ENCODE measurements at regions of chr11 and their contacts with region 1.

Region 1: GRCh38 chr11:117327567-117328374 is at the start of gene CEP164:
- DNase-seq: peak; percentile 97
- ATAC-seq: peak; percentile 98
- H3K4me3 Mint-ChIP-seq: peak within 1 kb of the TSS; percentile 64
- H3K27ac Mint-ChIP-seq: peak within 1 kb of the TSS; percentile 76
- H3K4me1 Mint-ChIP-seq: peaks cover 5% of the 10 kb centered on the region
- H3K27me3 Mint-ChIP-seq: peaks cover 5% of the 10 kb centered on the region
- total RNA-seq, gene CEP164: 31.7 to 32.4 TPM

Region 2: DNA sequence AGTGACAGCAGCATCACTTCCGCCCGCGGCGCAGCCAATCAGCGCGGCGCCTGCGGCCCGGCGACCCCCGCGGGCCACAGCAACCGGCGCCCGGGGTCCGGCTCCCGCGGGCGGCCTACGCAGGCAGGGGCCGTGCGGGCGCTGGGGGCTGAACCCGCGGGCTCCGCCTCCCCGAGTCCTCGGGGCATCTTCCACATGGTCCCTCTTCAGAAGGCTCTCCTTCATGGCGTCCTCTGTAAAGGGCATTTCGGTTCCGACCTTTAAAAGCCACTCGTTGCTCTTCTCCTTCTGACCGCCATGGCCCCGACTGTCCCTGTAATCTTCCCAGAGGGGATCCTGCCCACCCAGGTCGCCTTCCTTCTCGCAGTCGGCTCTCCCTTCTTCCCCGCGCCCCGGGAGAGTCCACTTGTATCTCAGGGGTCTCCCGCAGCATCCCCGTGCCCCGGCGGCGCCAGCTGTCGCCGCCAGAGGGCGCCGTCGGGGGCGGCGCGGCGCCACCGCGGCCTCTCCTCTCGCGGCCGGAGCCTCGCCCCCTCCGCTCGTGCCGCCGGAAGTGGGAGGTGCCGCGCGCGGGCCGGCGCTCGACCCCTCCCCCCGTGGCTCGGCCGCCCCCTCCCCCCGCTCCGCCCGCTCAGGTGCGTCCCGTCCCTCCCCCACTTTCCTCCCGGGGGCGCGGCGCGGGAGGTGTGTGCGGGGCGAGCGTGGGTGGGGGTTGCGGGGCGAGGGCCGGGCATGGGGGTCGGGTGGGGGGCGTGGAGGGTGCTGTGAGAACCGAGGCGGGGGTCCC is 95.5 kb before region 1 on chr11 and contains the start of gene RNF214:
- CTCF ChIA-PET with region 1: interaction called, 10 read pairs
- POLR2A ChIA-PET with region 1: interaction called, 15 read pairs
- DNase-seq: peak; percentile 79
- ATAC-seq: peak; percentile 77
- H3K4me3 Mint-ChIP-seq: peak within 1 kb of the TSS; percentile 89
- H3K27ac Mint-ChIP-seq: peak within 1 kb of the TSS; percentile 97
- H3K4me1 Mint-ChIP-seq: peaks cover 43% of the 10 kb centered on the region
- H3K27me3 Mint-ChIP-seq: no peaks in the 10 kb centered on the region
- total RNA-seq, gene RNF214: 19.5 to 21.2 TPM

Region 3: DNA sequence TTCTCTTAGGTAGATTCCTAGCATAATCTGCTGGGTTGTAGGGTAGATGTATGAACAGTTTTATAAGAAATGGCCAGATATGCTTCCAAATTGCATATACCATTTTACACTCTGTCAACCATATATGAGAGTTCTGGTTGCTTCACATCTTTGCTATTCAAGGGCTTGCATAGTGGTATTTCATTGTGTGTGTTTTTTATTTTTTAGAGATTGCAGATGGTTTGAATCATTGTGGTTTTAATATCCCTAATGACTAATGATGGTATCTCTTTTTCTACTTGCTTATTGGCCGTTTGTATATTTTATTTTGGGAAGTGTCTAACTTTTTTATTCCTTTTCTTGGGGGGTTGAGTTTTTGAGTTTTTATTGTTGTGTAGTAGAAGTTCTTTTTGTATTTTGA is 68.4 kb before region 1 on chr11:
- CTCF ChIA-PET with region 1: no interaction called
- POLR2A ChIA-PET with region 1: no interaction called
- DNase-seq: no peak
- ATAC-seq: no peak
- H3K4me3 Mint-ChIP-seq: no peak overlapping the region
- H3K27ac Mint-ChIP-seq: no peak overlapping the region
- H3K4me1 Mint-ChIP-seq: no peaks in the 10 kb centered on the region
- H3K27me3 Mint-ChIP-seq: no peaks in the 10 kb centered on the region